ENCODE measurements at regions of chr1 and their contacts with region 1.

Region 1: GRCh38 chr1:228751360-228752113 is 16.3 kb downstream of the RHOU start:
- DNase-seq: no peak
- ATAC-seq: peak; percentile 27
- H3K4me3 ChIP-seq: no peak overlapping the region
- H3K4me3 Mint-ChIP-seq: no peak overlapping the region
- H3K27ac ChIP-seq: no peak overlapping the region
- H3K27ac Mint-ChIP-seq: no peak overlapping the region
- H3K4me1 ChIP-seq: peaks cover 0 to 15% of the 10 kb centered on the region in 2 donors
- H3K4me1 Mint-ChIP-seq: peaks cover 0 to 38% (median 7%) of the 10 kb centered on the region in 7 donors
- H3K27me3 ChIP-seq: no peaks in the 10 kb centered on the region
- H3K27me3 Mint-ChIP-seq: peaks cover 12 to 54% (median 18%) of the 10 kb centered on the region in 5 donors

Region 2: GRCh38 chr1:228830954-228831481 is 79.5 kb after region 1 on chr1:
- CTCF ChIA-PET with region 1: no interaction called
- POLR2A ChIA-PET with region 1: no interaction called
- intact Hi-C with region 1: loop called in 1 of 2 experiments (anchors 5 kb)
- DNase-seq: no peak
- ATAC-seq: no peak
- H3K4me3 ChIP-seq: no peak overlapping the region
- H3K4me3 Mint-ChIP-seq: peak overlapping the region in 1 of 10 donors; percentile 43
- H3K27ac ChIP-seq: no peak overlapping the region
- H3K27ac Mint-ChIP-seq: peak overlapping the region in 2 of 9 donors; percentile 6 to 22
- H3K4me1 ChIP-seq: peaks cover 7 to 12% of the 10 kb centered on the region in 2 donors
- H3K4me1 Mint-ChIP-seq: peaks cover 7 to 54% (median 16%) of the 10 kb centered on the region in 7 donors
- H3K27me3 ChIP-seq: no peaks in the 10 kb centered on the region
- H3K27me3 Mint-ChIP-seq: peaks cover 0 to 32% (median 0%) of the 10 kb centered on the region in 5 donors

Measured in naive thymus-derived CD4-positive, alpha-beta T cell (primary cell).